Activated naive CD4-positive, alpha-beta T cell treated with anti-CD3 and anti-CD28 coated beads, Interleukin-2, amount 10 ng/mL, durations not matched to agents 7 days and 5 days (primary cell): ENCODE measurements at regions of chr5 and their contacts with region 1.

Region 1: DNA sequence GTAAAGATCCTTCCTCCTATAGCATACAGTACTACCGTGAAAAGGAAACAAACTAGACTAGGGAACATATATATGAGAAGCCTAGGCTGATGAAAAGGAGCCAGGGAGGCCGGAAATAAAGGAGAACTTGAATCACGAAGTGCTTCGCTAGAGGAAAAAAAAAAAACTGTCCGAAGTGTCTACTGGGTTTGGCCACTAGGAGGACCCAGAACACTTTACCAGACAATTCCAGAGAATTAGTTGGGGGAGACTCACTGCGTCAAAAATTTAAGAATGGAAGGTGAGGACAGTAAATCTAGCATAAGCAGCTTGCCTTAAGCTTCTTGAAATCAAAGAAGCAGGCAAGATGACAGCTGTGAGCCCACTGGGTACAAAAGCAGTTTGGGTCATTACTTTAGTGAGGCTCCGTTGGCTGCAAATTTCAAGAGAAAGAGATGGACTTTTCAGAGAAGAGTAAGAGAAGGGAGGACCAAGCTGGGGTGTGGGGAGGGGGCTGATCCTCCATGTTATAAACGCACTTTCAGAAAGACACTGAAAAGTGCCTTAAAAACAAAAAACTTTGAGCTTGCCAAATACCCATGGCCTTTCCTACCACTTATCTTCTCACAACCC is 47.4 kb downstream of the P4HA2 start:
- DNase-seq: no peak
- H3K4me3 Mint-ChIP-seq: no peak overlapping the region
- H3K27ac Mint-ChIP-seq: peak overlapping the region; percentile 67
- H3K4me1 Mint-ChIP-seq: peaks cover 39% of the 10 kb centered on the region
- H3K27me3 Mint-ChIP-seq: peaks cover 4% of the 10 kb centered on the region

Region 2: DNA sequence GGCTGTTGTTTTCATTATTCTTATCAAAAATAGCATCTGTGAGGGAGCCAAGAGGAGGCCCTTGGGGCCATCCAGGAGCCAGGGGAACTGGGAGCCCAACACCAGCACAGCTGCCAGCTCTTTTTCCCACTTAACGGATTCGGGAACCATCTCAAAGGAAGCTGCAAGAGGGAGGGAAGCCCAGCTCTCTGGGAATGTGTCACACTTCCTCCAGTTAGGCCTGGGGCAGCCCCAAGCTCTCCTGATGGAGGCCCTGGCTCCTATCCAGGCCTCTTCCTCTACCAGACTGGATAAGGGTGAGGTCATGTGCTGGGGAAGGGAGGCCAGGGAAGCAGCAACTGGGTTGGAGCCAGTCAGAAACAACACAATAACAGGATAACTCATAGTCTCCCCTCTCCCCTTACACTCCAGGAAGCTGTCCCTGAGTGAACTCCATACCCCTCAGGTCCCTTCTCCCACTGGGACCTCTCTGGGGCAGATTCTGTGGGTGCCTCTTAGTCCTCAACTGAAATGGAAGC is 93.9 kb before region 1 on chr5:
- CTCF ChIA-PET with region 1: no interaction called
- DNase-seq: no peak
- H3K4me3 Mint-ChIP-seq: no peak overlapping the region
- H3K27ac Mint-ChIP-seq: no peak overlapping the region
- H3K4me1 Mint-ChIP-seq: peaks cover 42% of the 10 kb centered on the region
- H3K27me3 Mint-ChIP-seq: peaks cover 24% of the 10 kb centered on the region

Region 3: GRCh38 chr5:132190161-132190817 is 10.0 kb after region 1 on chr5:
- CTCF ChIA-PET with region 1: interaction called, 30 read pairs
- DNase-seq: no peak
- H3K4me3 Mint-ChIP-seq: no peak overlapping the region
- H3K27ac Mint-ChIP-seq: no peak overlapping the region
- H3K4me1 Mint-ChIP-seq: no peaks in the 10 kb centered on the region
- H3K27me3 Mint-ChIP-seq: peaks cover 15% of the 10 kb centered on the region